ENCODE measurements at regions of chr2 and their contacts with region 1.

Region 1: GRCh38 chr2:238060542-238061314 is at the start of gene SCLY:
- DNase-seq: peak; percentile 99
- total RNA-seq, gene SCLY: 8.8 TPM

Region 2: DNA sequence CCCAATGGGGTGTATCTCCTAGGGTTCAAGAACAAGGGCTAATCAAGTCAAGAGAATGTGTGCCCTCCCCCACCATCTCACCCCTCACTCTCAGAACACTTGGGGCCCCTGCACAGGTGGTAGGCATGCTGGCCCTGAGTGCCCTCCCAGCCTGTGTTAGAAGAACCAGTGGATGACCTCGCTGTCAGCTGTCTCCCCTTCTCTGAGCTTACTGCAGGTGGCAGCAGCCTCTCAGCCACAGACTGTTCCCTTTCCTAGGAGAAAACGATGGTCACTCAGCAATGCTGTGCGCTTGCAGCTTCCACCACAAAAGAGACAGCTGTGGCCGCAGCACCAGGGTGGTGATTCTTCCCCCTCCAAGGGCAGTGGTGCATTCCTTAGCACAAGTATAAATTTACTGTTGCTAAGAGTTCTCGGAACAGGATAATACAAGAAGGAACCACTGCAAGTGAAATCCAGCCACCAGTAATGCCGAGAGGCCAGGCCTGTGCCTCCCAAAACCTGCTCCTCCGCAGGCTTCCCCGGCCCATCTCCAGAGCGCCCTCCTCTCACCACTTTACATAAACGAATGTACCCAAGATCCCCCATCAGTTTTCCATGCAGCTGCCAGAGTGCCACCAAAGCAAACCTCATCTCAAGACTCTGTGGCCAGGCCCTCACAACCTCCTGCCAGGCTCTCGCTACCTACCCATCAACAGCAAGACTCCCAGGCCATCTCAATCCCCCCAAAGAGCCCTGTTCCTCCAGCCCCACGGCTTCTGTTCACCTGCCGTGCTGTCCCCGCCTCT is 202.2 kb before region 1 on chr2:
- intact Hi-C with region 1: loop called (anchors 2 kb)
- DNase-seq: no peak

Region 3: DNA sequence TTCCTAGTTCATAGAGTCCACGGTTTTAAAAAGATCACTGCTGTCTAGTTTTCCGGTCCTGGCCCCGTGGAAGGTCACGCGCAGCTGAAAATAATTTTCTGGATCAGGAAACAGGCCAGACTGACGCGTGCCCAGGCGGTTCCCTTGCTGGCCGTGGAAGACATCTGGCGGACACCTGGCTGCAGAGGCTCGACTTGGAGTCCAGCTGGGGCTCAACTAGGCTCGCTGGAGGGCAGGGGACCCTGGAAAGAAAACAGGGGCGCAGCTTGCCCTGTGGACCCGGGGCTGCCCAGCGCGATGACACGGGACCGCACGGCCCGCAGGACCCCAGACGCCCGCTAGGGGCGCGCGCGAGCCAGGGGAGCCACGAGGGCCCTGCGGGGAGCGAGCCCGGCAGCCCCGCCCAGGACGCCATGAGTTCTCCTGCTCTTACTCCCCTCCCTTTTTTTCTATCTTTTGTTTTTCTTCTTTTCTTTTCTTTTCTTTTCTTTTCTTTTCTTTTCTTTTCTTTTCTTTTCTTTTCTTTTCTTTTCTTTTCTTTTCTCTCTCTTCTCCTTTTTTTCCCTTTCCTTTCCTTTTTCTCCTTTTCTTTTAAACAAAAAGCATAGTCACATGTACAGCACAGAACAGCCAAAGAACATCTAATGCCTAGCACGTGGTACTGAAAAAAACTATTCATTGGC is 137.1 kb before region 1 on chr2:
- intact Hi-C with region 1: loop called (anchors 2 kb)
- DNase-seq: peak; percentile 92

Region 4: DNA sequence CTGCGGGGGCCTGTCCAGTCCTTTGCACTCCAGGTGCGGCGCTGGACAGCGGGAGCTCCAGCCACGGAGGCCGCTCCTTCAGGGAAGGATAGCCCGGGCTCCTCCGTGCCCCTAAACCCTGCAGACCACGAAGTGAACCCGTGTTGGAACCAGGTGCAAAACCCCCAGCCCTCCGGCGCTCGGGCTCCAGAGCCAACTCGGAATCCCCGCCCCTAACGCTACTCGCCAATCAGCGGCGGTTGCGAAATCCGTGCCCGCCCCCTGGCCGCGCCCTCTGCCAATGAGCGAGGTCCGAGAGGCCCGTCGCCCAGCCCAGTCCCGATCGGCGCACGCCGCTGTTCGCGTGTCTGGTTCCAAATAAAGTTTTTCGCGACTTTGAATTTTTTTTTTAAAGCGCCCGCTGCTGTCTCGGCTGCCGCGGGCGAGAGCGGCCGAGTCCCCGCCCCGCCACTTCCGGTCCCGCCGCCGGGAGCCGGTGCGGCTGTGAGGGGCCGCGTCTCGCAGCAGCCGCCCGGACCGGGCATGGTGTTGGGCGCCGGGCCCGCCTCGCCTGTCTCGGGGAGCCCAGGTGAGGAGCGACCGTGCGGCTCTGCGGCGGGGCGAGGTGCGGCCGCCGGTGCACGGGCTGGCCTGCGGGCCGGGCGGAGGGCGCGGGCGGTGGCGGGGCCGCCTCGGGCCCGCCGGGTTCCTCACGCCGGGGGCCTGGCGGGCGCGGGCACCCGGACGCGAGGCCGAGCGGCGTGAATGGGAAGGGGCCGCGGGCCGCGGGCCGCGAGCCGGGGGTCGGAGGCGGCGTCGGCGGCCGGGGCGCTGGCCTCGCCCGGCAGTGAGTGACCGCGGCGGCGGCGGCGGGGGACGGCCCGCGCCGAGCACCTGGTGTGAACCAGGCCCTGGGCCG is 93.9 kb before region 1 on chr2 and contains the start of gene UBE2F:
- intact Hi-C with region 1: loop called (anchors 2 kb)
- DNase-seq: peak; percentile 99
- total RNA-seq, gene UBE2F: 61.0 TPM

Region 5: DNA sequence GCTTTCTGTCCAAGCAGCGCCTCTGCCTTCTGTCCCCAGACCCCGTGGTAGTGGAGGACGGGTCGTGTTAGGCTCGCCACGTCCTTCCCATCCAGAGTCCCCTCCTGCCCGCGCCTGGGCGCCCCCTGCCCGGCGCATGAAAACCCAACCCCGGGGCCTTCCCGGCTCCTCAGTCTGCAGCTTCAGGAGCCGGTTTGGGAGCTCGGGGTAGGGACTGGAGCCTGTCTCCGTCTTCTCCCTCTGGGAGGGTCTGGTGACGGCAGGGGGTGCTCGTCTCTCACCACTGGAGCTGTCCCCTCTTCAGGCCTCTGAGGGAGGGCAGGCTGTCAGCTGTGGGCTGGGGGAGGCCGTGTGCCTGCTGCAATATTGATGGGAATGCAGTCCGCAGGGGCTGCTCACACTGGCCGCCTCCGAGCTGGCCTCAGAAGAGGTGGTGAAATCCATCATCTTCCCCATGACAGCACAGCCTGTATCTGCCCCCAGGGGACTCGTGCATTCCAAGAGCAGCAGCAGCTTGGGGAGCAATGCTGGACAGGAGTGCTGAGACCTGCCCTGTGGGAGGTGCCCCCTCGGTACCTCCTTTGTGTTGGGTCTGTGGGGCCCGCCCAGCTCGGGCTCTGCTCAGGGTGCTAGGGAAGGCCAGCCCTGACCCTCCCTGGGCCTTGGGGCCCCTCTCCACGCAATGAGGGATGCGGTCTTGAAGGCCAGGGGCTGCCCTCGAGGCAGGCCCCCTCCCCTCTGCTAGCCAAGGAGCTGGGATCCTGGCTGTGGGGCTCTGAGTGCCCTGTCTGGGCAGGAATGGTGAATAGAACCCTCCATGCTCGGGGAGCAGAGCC is 60.0 kb after region 1 on chr2:
- intact Hi-C with region 1: no loop called
- DNase-seq: no peak

Region 6: GRCh38 chr2:238139196-238140039 is 78.7 kb after region 1 on chr2:
- intact Hi-C with region 1: loop called (anchors 5 kb)
- DNase-seq: no peak

Region 7: GRCh38 chr2:238187618-238188548 is 127.2 kb after region 1 on chr2:
- intact Hi-C with region 1: no loop called
- DNase-seq: no peak

Region 8: DNA sequence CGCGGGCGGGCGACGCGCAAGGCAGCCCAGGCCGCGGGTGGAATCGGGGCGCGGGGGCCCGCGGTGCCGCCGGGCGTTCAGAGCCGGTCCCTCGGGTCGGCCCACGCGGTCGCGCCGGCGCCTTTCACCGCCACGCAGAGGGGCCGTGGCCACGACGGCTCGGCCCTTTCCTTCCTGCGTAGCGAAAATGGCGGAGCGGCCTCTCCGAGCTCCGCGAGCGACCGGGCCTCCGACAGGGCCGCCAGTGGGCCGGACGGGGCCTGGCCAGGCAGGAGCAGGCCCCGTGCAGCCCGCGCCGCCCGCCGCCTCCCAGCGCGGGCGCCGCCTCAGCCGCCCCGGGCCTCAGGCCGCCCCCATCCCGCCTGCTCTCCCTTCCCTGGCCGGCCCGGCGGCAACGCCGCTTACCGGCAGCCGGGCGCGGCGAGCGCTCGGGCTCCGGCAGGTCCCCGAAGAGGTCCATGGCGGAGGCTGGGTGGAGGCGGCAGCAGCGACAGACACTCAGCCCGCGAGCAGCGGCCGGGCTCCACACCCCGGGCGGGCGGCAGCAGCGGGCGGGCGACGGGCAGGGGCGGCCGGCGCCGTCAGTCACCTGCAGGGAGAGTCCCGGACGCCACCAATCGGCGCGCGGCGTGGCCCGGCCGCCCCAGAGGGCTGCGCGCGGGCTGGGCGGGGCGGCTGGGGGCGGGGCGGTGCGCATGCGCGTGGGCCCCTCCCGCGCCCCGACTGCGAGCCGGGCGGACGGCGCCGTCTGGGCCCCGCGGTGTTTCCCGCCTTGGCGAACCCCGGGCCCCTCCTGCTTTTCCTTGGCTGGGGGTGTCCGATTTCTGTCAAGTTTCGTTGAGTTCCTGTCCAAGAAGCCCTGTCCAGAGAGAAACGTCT is 142.6 kb after region 1 on chr2 and contains the start of gene ILKAP:
- intact Hi-C with region 1: loop called (anchors 2 kb)
- DNase-seq: peak; percentile 95
- total RNA-seq, gene ILKAP: 29.5 TPM

Region 9: GRCh38 chr2:238239872-238240751 is 179.4 kb after region 1 on chr2 and contains the start of gene HES6:
- intact Hi-C with region 1: loop called (anchors 10 kb)
- DNase-seq: peak; percentile 95
- total RNA-seq, gene HES6: 2.7 TPM

Region 10: GRCh38 chr2:239482778-239483712 is 1422.3 kb after region 1 on chr2:
- intact Hi-C with region 1: no loop called
- DNase-seq: no peak